OCI-LY7 (cell line): ENCODE measurements at regions of chr21 and their contacts with region 1.

Region 1: GRCh38 chr21:41879190-41879998 is at the start of gene PRDM15:
- DNase-seq: peak; percentile 88
- H3K4me3 ChIP-seq: peak within 1 kb of the TSS; percentile 81
- H3K27ac ChIP-seq: peak within 1 kb of the TSS; percentile 96
- H3K4me1 ChIP-seq: peaks cover 48% of the 10 kb centered on the region
- CTCF ChIP-seq: no peak
- total RNA-seq, gene PRDM15: 19.7 and 30.5 TPM in 2 replicates

Region 2: DNA sequence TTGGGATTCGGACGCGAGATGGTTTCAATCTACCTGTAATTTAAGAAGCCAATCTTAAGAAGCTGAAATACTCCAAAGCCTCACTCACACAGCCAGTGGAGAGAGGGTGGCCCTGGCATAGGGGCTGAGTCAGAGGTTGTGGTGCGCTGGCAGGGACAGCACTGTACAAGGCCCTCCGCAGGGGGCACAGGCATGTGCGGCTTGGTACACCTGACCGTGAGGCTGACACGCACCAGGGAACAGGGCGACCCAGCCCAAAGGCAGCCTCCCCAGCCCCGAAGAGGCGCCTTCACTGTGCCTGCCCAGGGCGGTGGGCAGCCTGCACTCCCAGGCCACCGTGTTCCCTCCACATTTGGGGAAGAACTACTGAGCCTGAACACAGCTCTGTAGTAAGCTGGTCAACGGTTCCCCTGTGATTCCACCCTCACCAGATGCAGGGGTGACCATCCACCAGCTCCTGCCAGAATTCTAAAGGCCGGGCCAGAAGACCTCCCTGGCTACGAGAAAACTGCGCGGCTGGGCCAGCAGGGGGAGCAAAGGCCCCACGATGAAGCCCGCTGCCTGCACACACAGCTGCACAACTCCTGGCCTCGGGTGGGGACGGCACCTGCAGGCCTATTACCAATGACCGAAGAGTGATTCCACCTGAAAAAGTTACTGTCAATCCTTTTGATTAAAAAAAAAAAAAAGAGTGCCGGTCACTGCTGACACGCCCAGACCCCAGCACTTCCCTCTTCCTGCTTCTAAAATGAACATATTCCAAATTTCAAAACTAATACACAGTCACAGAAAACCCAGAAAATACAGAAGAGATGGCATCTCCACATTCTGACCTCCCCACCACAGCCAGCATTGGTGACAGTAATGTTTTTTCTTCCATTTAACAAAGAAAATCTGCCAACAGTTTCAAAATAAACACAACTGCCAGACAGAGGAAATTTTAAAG is 62.9 kb before region 1 on chr21:
- CTCF ChIA-PET with region 1: interaction called, 4 read pairs
- POLR2A ChIA-PET with region 1: interaction called, 4 read pairs
- intact Hi-C with region 1: loop called (anchors 1 kb)
- DNase-seq: peak; percentile 82
- H3K4me3 ChIP-seq: no peak overlapping the region
- H3K27ac ChIP-seq: peak overlapping the region; percentile 38
- H3K4me1 ChIP-seq: peaks cover 11% of the 10 kb centered on the region
- CTCF ChIP-seq: peak; percentile 86

Region 3: GRCh38 chr21:41861987-41862386 is 17.4 kb before region 1 on chr21:
- CTCF ChIA-PET with region 1: interaction called, 5 read pairs
- POLR2A ChIA-PET with region 1: interaction called, 34 read pairs
- intact Hi-C with region 1: no loop called
- DNase-seq: peak; percentile 69
- H3K4me3 ChIP-seq: peak overlapping the region; percentile 64
- H3K27ac ChIP-seq: peak overlapping the region; percentile 96
- H3K4me1 ChIP-seq: peaks cover 67% of the 10 kb centered on the region
- CTCF ChIP-seq: peak; percentile 67

Region 4: GRCh38 chr21:41926117-41926806 is 46.9 kb after region 1 on chr21:
- CTCF ChIA-PET with region 1: no interaction called
- POLR2A ChIA-PET with region 1: interaction called, 4 read pairs
- intact Hi-C with region 1: loop called (anchors 2 kb)
- DNase-seq: peak; percentile 82
- H3K4me3 ChIP-seq: peak overlapping the region; percentile 70
- H3K27ac ChIP-seq: peak overlapping the region; percentile 83
- H3K4me1 ChIP-seq: peaks cover 95% of the 10 kb centered on the region
- CTCF ChIP-seq: no peak

Region 5: DNA sequence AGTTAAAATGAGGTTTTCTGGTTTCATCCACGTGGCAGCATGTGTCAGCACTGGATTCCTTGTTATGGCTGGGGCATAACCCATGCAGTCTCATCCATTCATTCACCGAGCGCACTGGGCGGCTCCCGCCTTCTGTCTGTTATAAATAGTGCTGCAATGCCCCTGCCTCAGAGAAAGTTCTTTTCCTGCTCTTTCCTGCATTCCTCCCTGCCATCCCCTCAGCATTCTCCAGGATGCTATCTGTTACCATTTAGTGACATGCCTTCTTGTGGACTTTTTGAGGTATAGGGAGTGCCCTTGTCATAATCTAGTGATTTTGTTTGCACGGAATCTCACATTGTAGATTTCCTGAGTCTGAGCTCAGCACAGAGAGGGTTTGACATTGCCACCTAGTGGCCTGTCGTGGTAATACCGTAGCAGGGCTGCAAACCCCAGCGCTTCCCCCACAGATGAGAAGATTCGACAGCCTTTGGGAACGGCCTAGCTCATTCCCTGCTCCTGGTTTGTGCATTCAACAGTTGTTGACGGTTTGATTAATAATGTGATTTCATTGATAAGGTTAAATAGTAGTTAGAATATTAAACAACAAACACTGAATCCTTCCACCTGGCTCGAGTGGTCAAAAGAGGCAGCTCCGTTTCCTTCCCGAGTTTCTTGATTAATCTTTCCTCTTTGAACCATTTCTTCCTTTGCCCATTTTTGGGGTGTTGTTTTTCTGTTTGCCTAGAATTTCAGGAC is 238.0 kb after region 1 on chr21:
- CTCF ChIA-PET with region 1: interaction called, 3 read pairs
- POLR2A ChIA-PET with region 1: interaction called, 9 read pairs
- intact Hi-C with region 1: loop called (anchors 2 kb)
- DNase-seq: peak; percentile 84
- H3K4me3 ChIP-seq: peak overlapping the region; percentile 10
- H3K27ac ChIP-seq: peak overlapping the region; percentile 93
- H3K4me1 ChIP-seq: peaks cover 70% of the 10 kb centered on the region
- CTCF ChIP-seq: peak; percentile 99